ENCODE measurements at regions of chr7 and their contacts with region 1.

Region 1: DNA sequence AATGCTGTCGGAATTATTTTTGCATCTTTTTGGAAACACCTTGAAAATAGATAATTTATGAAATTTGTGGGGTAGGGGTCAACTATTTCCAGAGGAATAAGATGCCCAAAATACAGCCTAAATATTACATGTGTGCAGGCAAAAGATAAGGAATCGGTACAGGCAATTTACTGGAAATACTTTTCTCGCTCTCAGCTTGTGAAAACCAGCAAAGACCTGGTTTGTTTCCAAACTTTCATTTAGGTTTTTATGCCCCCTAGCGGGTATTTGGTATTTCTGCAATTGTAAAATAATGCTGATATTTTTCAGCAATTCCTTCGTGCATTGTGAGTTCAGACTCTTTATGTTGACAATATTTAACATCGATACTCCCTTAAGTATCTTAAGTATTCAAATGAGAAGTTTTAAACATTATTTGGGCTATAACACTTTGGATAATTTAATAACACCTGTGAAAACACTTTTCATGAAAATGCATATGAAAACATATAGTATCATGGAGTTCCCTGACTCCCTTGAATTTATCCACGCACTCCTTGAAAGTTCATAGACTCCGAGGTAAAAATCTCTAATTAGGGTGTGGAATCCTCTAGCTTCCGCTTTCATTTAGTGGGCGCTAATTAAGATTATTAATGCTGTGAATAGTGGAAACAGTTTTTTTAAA is 132.4 kb downstream of the TSPAN12 start:
- DNase-seq: no peak
- H3K4me3 Mint-ChIP-seq: no peak overlapping the region
- H3K27ac Mint-ChIP-seq: no peak overlapping the region
- H3K4me1 Mint-ChIP-seq: peaks cover 9% of the 10 kb centered on the region
- H3K27me3 Mint-ChIP-seq: no peaks in the 10 kb centered on the region
- CTCF ChIP-seq: peak; percentile 65

Region 2: DNA sequence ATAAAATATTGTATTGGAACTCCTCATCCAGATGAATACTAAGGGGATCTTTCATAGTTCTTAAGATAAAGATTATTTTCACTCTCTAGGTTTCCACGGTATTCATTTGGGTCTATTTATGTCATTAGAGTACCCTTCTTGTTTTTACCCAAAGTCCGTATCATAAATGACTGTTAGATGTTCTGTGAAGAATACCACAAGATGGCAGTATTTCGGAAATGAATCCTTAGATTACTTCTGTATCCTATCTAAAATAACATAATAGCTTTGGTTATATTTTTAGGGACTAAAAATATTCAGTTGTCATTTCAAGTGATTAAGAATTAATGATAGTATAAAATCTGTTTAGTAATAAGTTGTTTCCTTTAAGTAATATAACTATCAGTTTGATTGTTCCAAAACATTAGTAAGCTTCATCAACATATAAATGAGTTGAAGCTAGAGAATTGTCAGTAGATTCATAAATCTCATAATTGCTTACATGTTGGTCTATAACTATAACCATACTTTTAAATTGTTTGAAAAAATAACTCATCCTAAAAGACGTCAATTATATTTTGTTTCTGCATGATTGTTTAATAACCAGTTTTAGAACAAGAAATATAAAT is 790.0 kb before region 1 on chr7:
- CTCF ChIA-PET with region 1: no interaction called
- intact Hi-C with region 1: loop called (anchors 5 kb)
- DNase-seq: no peak
- H3K4me3 Mint-ChIP-seq: no peak overlapping the region
- H3K27ac Mint-ChIP-seq: no peak overlapping the region
- H3K4me1 Mint-ChIP-seq: no peaks in the 10 kb centered on the region
- H3K27me3 Mint-ChIP-seq: no peaks in the 10 kb centered on the region
- CTCF ChIP-seq: peak; percentile 26

Region 3: GRCh38 chr7:120564145-120564544 is 161.4 kb before region 1 on chr7:
- CTCF ChIA-PET with region 1: no interaction called
- intact Hi-C with region 1: loop called (anchors 5 kb)
- DNase-seq: no peak
- H3K4me3 Mint-ChIP-seq: no peak overlapping the region
- H3K27ac Mint-ChIP-seq: no peak overlapping the region
- H3K4me1 Mint-ChIP-seq: no peaks in the 10 kb centered on the region
- H3K27me3 Mint-ChIP-seq: no peaks in the 10 kb centered on the region
- CTCF ChIP-seq: no peak

Measured in Calu3 (cell line).